HAP-1 (cell line): ENCODE measurements at regions of chr1 and their contacts with region 1.

Region 1: DNA sequence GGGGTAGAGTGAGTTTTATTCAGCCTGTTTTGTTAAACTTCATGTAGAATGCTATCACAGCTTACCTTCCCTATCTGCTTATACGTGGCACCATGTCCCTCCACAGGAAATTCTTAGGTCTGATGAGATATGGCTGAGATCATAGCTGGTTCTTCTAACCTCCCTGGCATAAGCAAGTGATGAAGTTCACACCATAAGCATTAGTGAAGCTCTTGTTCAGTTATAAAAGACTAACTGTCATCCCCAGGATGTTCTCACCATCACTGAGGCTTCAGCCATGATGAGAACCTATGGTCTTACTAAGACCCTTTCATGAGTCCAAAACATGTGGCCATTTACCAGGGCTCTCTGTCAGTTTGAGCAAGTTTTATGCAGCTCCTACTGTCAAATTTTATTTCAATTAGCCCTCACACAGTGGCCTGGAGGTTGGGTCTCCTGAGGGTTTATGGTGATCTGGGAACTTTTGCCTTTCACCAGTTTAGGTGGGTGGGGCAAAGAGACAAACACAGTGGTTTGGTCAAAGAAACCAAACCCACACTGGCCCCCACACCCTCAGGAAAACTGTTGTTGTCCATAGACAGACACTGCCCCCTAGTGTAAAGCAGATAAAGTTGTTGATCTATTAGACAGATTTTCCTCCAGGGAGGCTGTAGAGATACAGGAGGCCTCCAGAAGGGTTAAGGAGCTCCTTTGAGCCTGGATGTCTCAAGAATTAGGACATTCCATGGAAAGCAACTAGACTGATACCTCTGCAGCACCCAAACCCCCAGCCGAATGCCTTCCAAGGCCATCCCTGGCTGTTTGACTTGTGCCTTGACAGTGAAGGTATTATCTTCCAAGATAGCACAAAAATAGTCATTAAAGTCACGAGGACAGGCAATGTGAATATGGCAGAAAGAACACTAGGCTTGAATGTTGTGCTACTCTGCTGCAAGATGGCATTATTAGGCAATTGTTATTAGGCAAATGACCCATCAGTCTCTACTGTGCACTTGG is 5.0 kb downstream of the SLC22A15 start:
- DNase-seq: peak; percentile 78 to 82
- H3K4me3 ChIP-seq: no peak overlapping the region
- H3K4me1 ChIP-seq: peaks cover 35% of the 10 kb centered on the region
- H3K27me3 ChIP-seq: no peaks in the 10 kb centered on the region

Region 2: GRCh38 chr1:115793162-115793561 is 188.1 kb before region 1 on chr1:
- in situ Hi-C with region 1: no loop called
- DNase-seq: no peak
- H3K4me3 ChIP-seq: no peak overlapping the region
- H3K4me1 ChIP-seq: peaks cover 14% of the 10 kb centered on the region
- H3K27me3 ChIP-seq: no peaks in the 10 kb centered on the region

Region 3: GRCh38 chr1:115807723-115808122 is 173.6 kb before region 1 on chr1:
- in situ Hi-C with region 1: loop called (anchors 5 kb)
- DNase-seq: peak; percentile 66 to 83
- H3K4me3 ChIP-seq: no peak overlapping the region
- H3K4me1 ChIP-seq: no peaks in the 10 kb centered on the region
- H3K27me3 ChIP-seq: no peaks in the 10 kb centered on the region

Region 4: GRCh38 chr1:116218990-116219321 is 237.7 kb after region 1 on chr1:
- in situ Hi-C with region 1: no loop called
- DNase-seq: no peak
- H3K4me3 ChIP-seq: no peak overlapping the region
- H3K4me1 ChIP-seq: no peaks in the 10 kb centered on the region
- H3K27me3 ChIP-seq: peaks cover 6% of the 10 kb centered on the region; the same call in 1 of the 2 replicates